Common myeloid progenitor, CD34-positive (primary cell): ENCODE measurements at regions of chr9 and their contacts with region 1.

Region 1: DNA sequence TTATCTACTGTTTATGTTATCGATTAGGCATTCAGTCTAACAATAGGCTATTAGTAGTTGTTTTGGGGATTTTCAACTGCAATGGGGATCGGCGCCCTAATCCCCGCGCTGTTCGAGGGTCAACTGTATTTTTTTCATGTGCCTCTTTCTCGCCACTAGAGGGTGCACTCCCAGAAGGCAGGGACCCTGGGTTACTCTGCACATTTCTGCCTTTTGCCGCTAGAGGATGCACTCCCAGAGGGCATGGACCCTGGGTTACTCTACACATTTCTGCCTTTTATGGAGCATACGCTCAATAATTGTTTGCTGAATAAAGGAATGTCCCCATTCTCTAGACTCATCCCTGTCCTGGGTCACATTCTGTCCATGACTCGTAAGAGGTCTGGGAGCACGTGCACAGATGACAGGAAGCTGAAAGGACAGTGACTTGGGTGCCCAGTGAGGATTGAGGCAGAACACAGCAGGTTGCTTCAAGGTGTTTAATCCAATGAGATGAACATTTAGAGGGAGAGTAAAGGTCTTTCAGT is 27.9 kb upstream of the RECK start:
- DNase-seq: peak; percentile 71 to 86 (median 85)
- H3K4me3 ChIP-seq: no peak overlapping the region
- H3K27ac ChIP-seq: no peak overlapping the region
- H3K4me1 ChIP-seq: peaks cover 0 to 3% (median 0%) of the 10 kb centered on the region in 4 experiments
- H3K27me3 ChIP-seq: peaks cover 0 to 10% (median 0%) of the 10 kb centered on the region in 5 experiments

Region 2: GRCh38 chr9:35690431-35691333 is 318.2 kb before region 1 on chr9:
- CTCF ChIA-PET with region 1: no interaction called
- POLR2A ChIA-PET with region 1: no interaction called
- DNase-seq: peak; percentile 11 to 46 (median 39)
- H3K4me3 ChIP-seq: peak overlapping the region; percentile 52 to 87 (median 74)
- H3K27ac ChIP-seq: peak overlapping the region in 1 of 2 experiments; percentile 43
- H3K4me1 ChIP-seq: peaks cover 0 to 19% (median 18%) of the 10 kb centered on the region in 4 experiments
- H3K27me3 ChIP-seq: no peaks in the 10 kb centered on the region

Region 3: DNA sequence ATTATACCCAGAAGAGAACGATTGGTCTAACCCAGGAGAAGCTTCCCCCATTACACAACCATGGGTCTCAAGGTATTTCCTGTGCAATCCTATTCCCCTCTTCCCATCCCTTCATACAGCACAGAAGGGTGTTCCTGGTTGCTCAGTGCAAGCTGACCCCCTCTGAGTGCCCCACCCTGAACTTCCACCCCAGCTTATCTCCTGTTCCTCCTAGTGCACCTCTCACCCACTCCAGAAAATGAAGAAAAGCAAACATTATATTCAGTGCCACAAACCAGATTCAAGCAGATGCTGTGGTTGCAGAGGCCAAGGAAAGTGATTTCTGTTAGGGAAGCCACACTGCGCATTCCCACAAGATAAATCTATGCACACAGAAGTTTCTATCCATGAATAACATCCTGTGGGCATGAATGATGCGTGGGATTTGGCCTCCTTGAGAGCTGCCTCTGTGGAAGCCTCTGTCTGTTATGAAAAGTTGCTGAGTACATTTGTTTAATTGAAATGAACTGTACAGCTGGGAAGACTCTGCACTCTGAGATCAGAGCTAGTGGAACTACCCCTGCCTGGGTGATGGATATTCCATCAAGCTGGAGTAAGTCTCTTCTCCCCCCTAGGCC is 48.7 kb before region 1 on chr9:
- CTCF ChIA-PET with region 1: interaction called, 10 read pairs
- POLR2A ChIA-PET with region 1: no interaction called
- DNase-seq: no peak
- H3K4me3 ChIP-seq: no peak overlapping the region
- H3K27ac ChIP-seq: no peak overlapping the region
- H3K4me1 ChIP-seq: no peaks in the 10 kb centered on the region
- H3K27me3 ChIP-seq: peaks cover 0 to 14% (median 0%) of the 10 kb centered on the region in 5 experiments

Region 4: DNA sequence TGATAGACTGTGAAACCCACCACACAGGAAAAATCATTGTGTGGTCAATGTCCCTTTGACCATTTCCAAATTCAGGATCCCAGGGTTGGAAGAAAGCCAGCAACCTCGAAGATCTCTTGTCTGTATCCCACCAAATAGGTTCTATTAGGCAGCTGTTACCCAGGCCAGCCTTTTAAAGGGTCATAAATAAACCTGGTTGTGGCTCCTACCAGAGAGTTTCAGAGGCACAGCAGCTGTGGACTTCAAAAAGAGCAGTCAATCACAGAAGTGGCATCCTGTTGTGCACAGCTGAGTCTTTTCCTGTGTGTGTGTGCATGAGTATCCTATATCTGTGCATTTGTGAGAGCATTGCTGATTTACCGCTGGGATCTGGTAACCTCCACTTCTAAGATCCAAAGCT is 27.1 kb before region 1 on chr9:
- CTCF ChIA-PET with region 1: interaction called, 11 read pairs
- POLR2A ChIA-PET with region 1: no interaction called
- DNase-seq: no peak
- H3K4me3 ChIP-seq: no peak overlapping the region
- H3K27ac ChIP-seq: no peak overlapping the region
- H3K4me1 ChIP-seq: peaks cover 0 to 2% (median 0%) of the 10 kb centered on the region in 4 experiments
- H3K27me3 ChIP-seq: peaks cover 0 to 6% (median 2%) of the 10 kb centered on the region in 5 experiments

Region 5: GRCh38 chr9:36074870-36075532 is 66.2 kb after region 1 on chr9:
- CTCF ChIA-PET with region 1: no interaction called
- POLR2A ChIA-PET with region 1: no interaction called
- DNase-seq: peak in 2 of 3 donors; percentile 4 to 16
- H3K4me3 ChIP-seq: no peak overlapping the region
- H3K27ac ChIP-seq: no peak overlapping the region
- H3K4me1 ChIP-seq: peaks cover 0 to 7% (median 3%) of the 10 kb centered on the region in 4 experiments
- H3K27me3 ChIP-seq: no peaks in the 10 kb centered on the region